CD8-positive, alpha-beta T cell (primary cell): ENCODE measurements at regions of chr12 and their contacts with region 1.

Region 1: GRCh38 chr12:52645120-52645761 is 6.8 kb downstream of the KRT2 start:
- DNase-seq: peak; percentile 22 to 94 (median 64)
- ATAC-seq: peak; percentile 88
- H3K4me3 ChIP-seq: no peak overlapping the region
- H3K4me3 Mint-ChIP-seq: peak overlapping the region; percentile 41
- H3K27ac ChIP-seq: peak overlapping the region; percentile 79 to 82
- H3K27ac Mint-ChIP-seq: peak overlapping the region; percentile 99
- H3K4me1 ChIP-seq: peaks cover 83% of the 10 kb centered on the region
- H3K4me1 Mint-ChIP-seq: peaks cover 87% of the 10 kb centered on the region
- H3K27me3 ChIP-seq: no peaks in the 10 kb centered on the region
- H3K27me3 Mint-ChIP-seq: no peaks in the 10 kb centered on the region
- CTCF ChIP-seq: no peak

Region 2: GRCh38 chr12:52608831-52609630 is 36.2 kb before region 1 on chr12:
- CTCF ChIA-PET with region 1: interaction called, 14 read pairs
- POLR2A ChIA-PET with region 1: interaction called, 10 read pairs
- intact Hi-C with region 1: loop called (anchors 1 kb)
- DNase-seq: peak in 4 of 9 experiments; percentile 26 to 60 (median 40)
- ATAC-seq: peak; percentile 29
- H3K4me3 ChIP-seq: no peak overlapping the region
- H3K4me3 Mint-ChIP-seq: peak overlapping the region; percentile 38
- H3K27ac ChIP-seq: peak overlapping the region in 1 of 2 experiments; percentile 5
- H3K27ac Mint-ChIP-seq: peak overlapping the region; percentile 95
- H3K4me1 ChIP-seq: peaks cover 97% of the 10 kb centered on the region
- H3K4me1 Mint-ChIP-seq: peaks cover 94% of the 10 kb centered on the region
- H3K27me3 ChIP-seq: no peaks in the 10 kb centered on the region
- H3K27me3 Mint-ChIP-seq: no peaks in the 10 kb centered on the region
- CTCF ChIP-seq: no peak

Region 3: GRCh38 chr12:52615208-52615868 is 29.9 kb before region 1 on chr12:
- CTCF ChIA-PET with region 1: interaction called, 14 read pairs
- POLR2A ChIA-PET with region 1: interaction called, 10 read pairs
- intact Hi-C with region 1: loop called (anchors 1 kb)
- DNase-seq: peak in 3 of 9 experiments; percentile 35 to 61 (median 48)
- ATAC-seq: peak; percentile 45
- H3K4me3 ChIP-seq: no peak overlapping the region
- H3K4me3 Mint-ChIP-seq: peak overlapping the region; percentile 53
- H3K27ac ChIP-seq: peak overlapping the region; percentile 58 to 60
- H3K27ac Mint-ChIP-seq: peak overlapping the region; percentile 95
- H3K4me1 ChIP-seq: peaks cover 88% of the 10 kb centered on the region
- H3K4me1 Mint-ChIP-seq: peaks cover 82% of the 10 kb centered on the region
- H3K27me3 ChIP-seq: no peaks in the 10 kb centered on the region
- H3K27me3 Mint-ChIP-seq: no peaks in the 10 kb centered on the region
- CTCF ChIP-seq: no peak

Region 4: GRCh38 chr12:52634266-52635056 is 10.8 kb before region 1 on chr12:
- CTCF ChIA-PET with region 1: interaction called, 12 read pairs
- POLR2A ChIA-PET with region 1: interaction called, 41 read pairs
- intact Hi-C with region 1: no loop called
- DNase-seq: peak in 1 of 9 experiments; percentile 43
- ATAC-seq: no peak
- H3K4me3 ChIP-seq: no peak overlapping the region
- H3K4me3 Mint-ChIP-seq: no peak overlapping the region
- H3K27ac ChIP-seq: no peak overlapping the region
- H3K27ac Mint-ChIP-seq: peak overlapping the region; percentile 19
- H3K4me1 ChIP-seq: peaks cover 59% of the 10 kb centered on the region
- H3K4me1 Mint-ChIP-seq: peaks cover 68% of the 10 kb centered on the region
- H3K27me3 ChIP-seq: no peaks in the 10 kb centered on the region
- H3K27me3 Mint-ChIP-seq: no peaks in the 10 kb centered on the region
- CTCF ChIP-seq: no peak

Region 5: GRCh38 chr12:52681526-52682380 is 36.5 kb after region 1 on chr12:
- CTCF ChIA-PET with region 1: no interaction called
- POLR2A ChIA-PET with region 1: no interaction called
- intact Hi-C with region 1: loop called in 1 of 2 experiments (anchors 5 kb)
- DNase-seq: peak; percentile 4 to 79 (median 61)
- ATAC-seq: peak; percentile 98
- H3K4me3 ChIP-seq: no peak overlapping the region
- H3K4me3 Mint-ChIP-seq: peak overlapping the region; percentile 4
- H3K27ac ChIP-seq: no peak overlapping the region
- H3K27ac Mint-ChIP-seq: peak overlapping the region; percentile 84
- H3K4me1 ChIP-seq: peaks cover 32% of the 10 kb centered on the region
- H3K4me1 Mint-ChIP-seq: peaks cover 36% of the 10 kb centered on the region
- H3K27me3 ChIP-seq: no peaks in the 10 kb centered on the region
- H3K27me3 Mint-ChIP-seq: no peaks in the 10 kb centered on the region
- CTCF ChIP-seq: no peak

Region 6: GRCh38 chr12:52691076-52691840 is 46.0 kb after region 1 on chr12:
- CTCF ChIA-PET with region 1: interaction called, 3 read pairs
- POLR2A ChIA-PET with region 1: interaction called, 5 read pairs
- intact Hi-C with region 1: loop called (anchors 2 kb)
- DNase-seq: peak; percentile 22 to 78 (median 65)
- ATAC-seq: peak; percentile 84
- H3K4me3 ChIP-seq: peak overlapping the region; percentile 44 to 47
- H3K4me3 Mint-ChIP-seq: peak overlapping the region; percentile 84
- H3K27ac ChIP-seq: no peak overlapping the region
- H3K27ac Mint-ChIP-seq: peak overlapping the region; percentile 89
- H3K4me1 ChIP-seq: peaks cover 19% of the 10 kb centered on the region
- H3K4me1 Mint-ChIP-seq: peaks cover 42% of the 10 kb centered on the region
- H3K27me3 ChIP-seq: no peaks in the 10 kb centered on the region
- H3K27me3 Mint-ChIP-seq: no peaks in the 10 kb centered on the region
- CTCF ChIP-seq: no peak

Region 7: GRCh38 chr12:52870351-52871290 is 225.4 kb after region 1 on chr12:
- CTCF ChIA-PET with region 1: interaction called, 4 read pairs
- POLR2A ChIA-PET with region 1: no interaction called
- intact Hi-C with region 1: loop called in 1 of 2 experiments (anchors 5 kb)
- DNase-seq: peak; percentile 71 to 92 (median 81)
- ATAC-seq: peak; percentile 71
- H3K4me3 ChIP-seq: no peak overlapping the region
- H3K4me3 Mint-ChIP-seq: no peak overlapping the region
- H3K27ac ChIP-seq: peak overlapping the region; percentile 28 to 64
- H3K27ac Mint-ChIP-seq: peak overlapping the region; percentile 41
- H3K4me1 ChIP-seq: peaks cover 33% of the 10 kb centered on the region
- H3K4me1 Mint-ChIP-seq: peaks cover 33% of the 10 kb centered on the region
- H3K27me3 ChIP-seq: no peaks in the 10 kb centered on the region
- H3K27me3 Mint-ChIP-seq: no peaks in the 10 kb centered on the region
- CTCF ChIP-seq: peak; percentile 84